Ovary (tissue), 10 donors: ENCODE measurements at regions of chr1 and their contacts with region 1.

Region 1: DNA sequence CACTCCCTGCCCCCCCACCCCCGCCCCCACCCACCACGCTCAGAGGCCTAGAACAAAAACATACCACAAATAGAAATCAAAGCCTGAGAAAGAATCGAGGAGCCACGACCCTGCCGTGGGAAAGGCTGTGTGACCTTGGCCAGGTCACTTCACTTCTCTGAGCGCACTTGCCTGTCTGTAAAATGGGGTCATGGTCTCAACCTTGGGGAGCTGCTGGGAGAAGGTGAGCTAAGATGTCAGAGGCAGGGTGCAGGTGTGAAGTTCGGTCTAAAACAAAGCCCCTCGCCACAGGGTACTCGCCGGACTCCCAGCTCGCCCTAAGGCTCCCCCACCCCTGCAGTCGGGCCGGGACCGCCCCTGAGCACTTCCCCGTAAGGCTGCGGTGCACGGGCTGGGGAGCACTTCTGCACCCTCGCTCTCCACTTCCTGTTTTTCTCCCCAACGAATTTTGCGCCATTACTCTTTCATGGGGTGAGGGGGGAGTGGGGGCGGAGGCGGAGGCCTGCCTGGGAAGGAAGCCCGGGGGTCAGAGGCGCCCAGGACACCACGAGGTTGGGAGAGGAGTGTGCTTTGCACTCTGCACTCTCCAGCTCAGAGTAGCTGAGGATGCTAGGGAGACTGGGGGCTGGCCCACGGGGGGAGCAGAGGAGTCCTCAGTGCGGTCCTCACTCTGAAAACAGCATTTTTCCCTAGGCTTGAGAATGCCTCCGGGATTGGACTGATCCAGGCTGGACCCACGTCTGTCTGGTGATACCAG is 21.9 kb upstream of the PIK3CD start:
- DNase-seq: peak; percentile 63 to 82 (median 70)
- H3K4me3 ChIP-seq: no peak overlapping the region
- H3K27ac ChIP-seq: no peak overlapping the region
- H3K4me1 ChIP-seq: peaks cover 14% of the 10 kb centered on the region
- H3K27me3 ChIP-seq: no peaks in the 10 kb centered on the region
- CTCF ChIP-seq: no peak
- EP300 ChIP-seq: no peak
- POLR2A ChIP-seq: no peak

Region 2: DNA sequence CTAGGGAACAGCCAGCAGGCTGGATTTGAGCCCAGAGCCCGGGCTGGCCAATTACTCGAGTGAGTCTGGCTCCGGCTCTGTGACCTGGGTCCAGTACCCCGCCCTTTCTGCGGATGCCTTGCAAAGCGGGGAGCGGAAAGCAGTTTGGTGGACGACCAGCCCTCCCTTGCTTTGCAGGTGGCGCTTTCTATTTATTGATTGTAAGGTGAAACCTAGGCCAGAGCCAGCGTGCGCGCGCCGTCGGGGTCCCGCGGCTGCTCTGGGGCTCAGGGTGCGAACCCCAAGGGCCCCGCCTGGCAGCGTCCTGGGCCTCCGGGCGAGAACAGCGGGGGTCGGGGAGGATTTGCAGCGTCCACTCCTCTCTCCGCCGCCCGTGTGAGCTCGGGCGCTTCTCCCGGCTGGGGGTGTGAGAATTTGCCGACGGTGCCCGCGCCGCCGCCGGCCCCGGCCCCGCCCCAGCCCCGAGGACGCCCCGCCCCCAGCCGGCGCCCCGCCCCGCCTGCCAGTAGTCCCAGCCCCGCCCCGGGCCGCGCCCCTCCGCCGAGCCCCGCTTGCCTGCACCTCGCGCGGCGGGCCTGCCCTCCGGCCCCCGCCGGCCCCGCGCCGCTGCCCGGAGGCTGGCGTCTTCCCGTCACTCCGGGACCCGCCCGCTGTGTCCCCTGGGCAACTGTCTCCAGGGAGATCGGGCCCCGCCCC is 59.5 kb after region 1 on chr1:
- intact Hi-C with region 1: loop called in 1 of 4 experiments (anchors 5 kb)
- DNase-seq: peak; percentile 82 to 90 (median 88)
- H3K4me3 ChIP-seq: peak overlapping the region; percentile 47
- H3K27ac ChIP-seq: peak overlapping the region; percentile 20 to 76
- H3K4me1 ChIP-seq: peaks cover 4% of the 10 kb centered on the region
- H3K27me3 ChIP-seq: no peaks in the 10 kb centered on the region
- CTCF ChIP-seq: no peak
- EP300 ChIP-seq: no peak
- POLR2A ChIP-seq: no peak